ENCODE measurements at regions of chr9 and their contacts with region 1.

Region 1: DNA sequence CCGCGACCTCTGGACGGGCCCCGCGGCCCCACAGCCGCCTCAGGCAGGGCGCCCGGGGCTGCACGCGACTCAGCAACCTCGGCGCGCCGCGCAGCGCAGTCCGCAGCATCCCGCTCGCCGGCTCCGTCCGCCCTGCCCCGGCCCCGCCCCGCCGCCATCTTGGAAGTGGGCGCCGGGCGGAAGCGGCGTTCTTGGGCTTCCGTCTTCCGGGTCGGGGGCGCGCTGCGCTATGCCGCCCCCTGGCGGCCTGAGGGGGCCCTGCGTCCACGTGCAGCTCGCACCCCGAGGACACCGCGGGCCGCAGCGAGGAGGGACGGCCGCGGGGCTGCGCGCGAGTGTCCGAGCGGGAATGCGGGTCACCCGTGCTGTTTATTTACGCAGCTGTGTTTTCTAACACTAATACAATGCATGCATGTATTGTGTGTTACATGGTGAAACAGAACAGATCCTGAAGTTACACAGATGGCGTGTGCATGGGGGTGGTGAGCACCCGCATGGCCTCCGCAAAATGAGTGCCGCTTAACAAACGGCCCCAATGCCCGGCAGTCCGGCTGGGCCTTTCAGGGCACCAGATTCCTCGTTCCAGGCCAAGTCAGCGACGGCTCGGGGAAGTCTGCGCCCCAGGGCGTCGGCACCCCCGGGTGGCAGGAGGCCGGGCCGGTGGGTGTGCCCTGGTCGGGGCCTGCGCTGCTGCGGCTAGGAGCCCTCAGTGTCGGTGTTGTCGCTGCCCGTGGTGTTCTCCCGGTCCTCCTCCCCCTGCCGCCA is at the start of gene DNLZ:
- DNase-seq: peak; percentile 94
- H3K4me3 ChIP-seq: peak within 1 kb of the TSS; percentile 79 to 96
- H3K27ac ChIP-seq: peak within 1 kb of the TSS; percentile 75 to 96; a peak in 3 of 4 replicates
- H3K4me1 ChIP-seq: peaks cover 0 to 61% of the 10 kb centered on the region in 2 experiments; a peak in 1 of 4 replicates
- H3K27me3 ChIP-seq: no peaks in the 10 kb centered on the region
- CTCF ChIP-seq: peak; percentile 85
- EP300 ChIP-seq: no peak
- RAD21 ChIP-seq: peak; percentile 40
- polyA plus RNA-seq, gene DNLZ: 24.5 and 40.6 TPM in 2 replicates

Region 2: GRCh38 chr9:136327313-136327974 is 36.3 kb before region 1 on chr9 and contains the start of gene GPSM1:
- CTCF ChIA-PET with region 1: interaction called, 60 read pairs
- POLR2A ChIA-PET with region 1: interaction called, 11 read pairs
- DNase-seq: peak; percentile 94
- H3K4me3 ChIP-seq: peak within 1 kb of the TSS; percentile 82 to 84
- H3K27ac ChIP-seq: peak within 1 kb of the TSS; percentile 87 to 98
- H3K4me1 ChIP-seq: peaks cover 24 to 50% of the 10 kb centered on the region in 2 experiments
- H3K27me3 ChIP-seq: no peaks in the 10 kb centered on the region
- CTCF ChIP-seq: no peak
- EP300 ChIP-seq: no peak; a peak in 1 of 4 replicates
- RAD21 ChIP-seq: no peak
- polyA plus RNA-seq, gene GPSM1: 22.8 and 26.7 TPM in 2 replicates

Region 3: DNA sequence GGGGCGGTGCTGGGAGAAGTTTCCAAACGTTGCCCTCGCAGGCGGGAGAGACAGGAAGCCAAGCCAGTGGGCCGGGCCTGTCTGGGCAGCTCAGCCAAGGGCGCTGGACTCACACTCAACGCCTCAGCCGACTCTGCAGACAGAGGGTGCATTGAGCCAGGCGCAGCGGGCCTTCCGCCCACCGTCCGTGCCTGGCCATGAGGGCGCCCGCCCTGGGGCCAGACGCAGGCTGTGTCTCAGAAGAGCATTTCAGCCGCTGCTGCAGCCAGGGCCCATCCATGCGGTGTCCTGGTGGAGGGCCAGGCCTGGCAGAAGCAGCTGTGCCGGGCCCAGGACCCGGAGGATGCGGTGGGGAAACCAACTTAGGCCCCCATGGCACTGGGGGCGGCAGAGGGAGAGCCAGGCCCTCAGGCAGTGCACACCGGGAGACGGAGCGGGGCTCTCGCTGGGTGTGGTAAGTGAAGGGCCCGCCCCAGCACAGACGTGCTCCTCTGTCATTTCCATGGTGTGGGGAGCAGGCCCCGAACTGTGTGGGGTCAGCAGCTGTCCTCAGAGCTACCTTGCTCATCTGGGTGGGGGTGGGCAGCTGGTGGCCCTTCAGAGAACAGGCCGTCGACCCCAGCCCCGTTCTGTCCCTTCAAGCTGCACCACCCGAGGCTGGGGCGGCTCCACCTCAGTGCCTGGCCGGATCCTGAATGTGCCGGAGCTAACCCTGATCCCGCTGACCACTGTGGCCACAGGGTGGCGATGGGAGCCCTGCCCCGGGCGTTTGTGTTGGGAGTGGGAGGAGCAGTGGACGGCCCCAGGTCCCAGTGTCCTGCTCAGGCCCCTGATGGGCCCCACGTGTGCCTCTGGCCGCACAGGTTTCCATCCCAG is 18.3 kb before region 1 on chr9:
- CTCF ChIA-PET with region 1: interaction called, 28 read pairs
- POLR2A ChIA-PET with region 1: interaction called, 8 read pairs
- DNase-seq: peak; percentile 74
- H3K4me3 ChIP-seq: no peak overlapping the region
- H3K27ac ChIP-seq: peak overlapping the region in 1 of 2 experiments; percentile 58; a peak in 1 of 4 replicates
- H3K4me1 ChIP-seq: peaks cover 0 to 49% of the 10 kb centered on the region in 2 experiments; a peak in 1 of 4 replicates
- H3K27me3 ChIP-seq: no peaks in the 10 kb centered on the region
- CTCF ChIP-seq: peak; percentile 41
- EP300 ChIP-seq: no peak
- RAD21 ChIP-seq: peak; percentile 23

Region 4: DNA sequence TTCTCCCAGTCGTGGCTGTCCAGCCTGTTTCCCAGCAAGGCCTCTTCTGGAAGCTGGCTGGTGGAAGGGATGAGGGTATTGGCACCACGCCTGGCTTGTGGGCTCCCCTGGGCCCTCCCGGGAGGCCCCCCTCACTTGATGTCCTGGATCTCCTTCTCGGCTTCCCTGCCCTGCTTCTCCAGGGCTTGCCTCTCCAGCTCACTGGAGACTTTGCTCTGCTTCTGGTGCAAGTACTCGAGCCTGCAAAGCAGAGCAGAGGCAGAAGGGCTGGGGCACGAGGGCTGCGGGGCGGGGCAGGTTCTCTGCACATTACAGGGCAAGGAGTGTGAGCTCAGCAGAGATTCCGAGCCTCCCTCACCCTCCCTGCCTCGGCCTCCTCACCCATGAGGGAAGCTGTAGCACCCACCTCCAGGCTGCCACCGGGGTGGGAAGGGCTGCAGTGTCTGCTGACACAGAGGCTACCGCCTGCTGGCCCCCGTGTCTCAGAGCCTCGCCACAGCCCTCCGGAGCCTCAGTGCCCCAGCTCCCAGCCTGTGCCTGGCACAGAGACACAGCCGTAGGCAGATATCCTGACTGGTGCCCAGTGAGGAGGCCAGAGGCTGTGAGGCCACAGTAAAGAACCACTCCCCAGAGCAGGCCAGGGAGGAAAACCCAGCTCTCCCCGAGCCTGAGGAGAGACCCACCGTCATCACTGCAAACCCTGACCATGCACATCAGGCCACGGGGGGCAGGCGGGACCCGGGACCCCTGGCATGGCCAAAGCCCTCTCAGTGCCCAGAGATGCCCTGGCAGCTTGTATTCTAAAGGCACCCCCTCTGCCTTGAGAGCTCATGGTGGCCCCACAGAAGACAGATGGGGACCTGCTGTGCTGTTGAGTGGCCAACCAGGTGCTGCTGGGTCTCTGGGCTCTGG is 29.0 kb after region 1 on chr9:
- CTCF ChIA-PET with region 1: interaction called, 41 read pairs
- POLR2A ChIA-PET with region 1: interaction called, 4 read pairs
- DNase-seq: no peak
- H3K4me3 ChIP-seq: no peak overlapping the region
- H3K27ac ChIP-seq: no peak overlapping the region
- H3K4me1 ChIP-seq: no peaks in the 10 kb centered on the region
- H3K27me3 ChIP-seq: no peaks in the 10 kb centered on the region
- CTCF ChIP-seq: no peak
- EP300 ChIP-seq: no peak
- RAD21 ChIP-seq: no peak

Region 5: GRCh38 chr9:136410500-136411287 is 46.9 kb after region 1 on chr9 and contains the starts of genes ENTR1 and PMPCA:
- CTCF ChIA-PET with region 1: interaction called, 20 read pairs
- POLR2A ChIA-PET with region 1: interaction called, 5 read pairs
- DNase-seq: peak; percentile 99
- H3K4me3 ChIP-seq: peak within 1 kb of the TSS; percentile 92 to 98
- H3K27ac ChIP-seq: peak within 1 kb of the TSS; percentile 62 to 67; a peak in 3 of 4 replicates
- H3K4me1 ChIP-seq: peaks cover 16 to 24% of the 10 kb centered on the region in 2 experiments
- H3K27me3 ChIP-seq: no peaks in the 10 kb centered on the region
- CTCF ChIP-seq: no peak
- EP300 ChIP-seq: no peak
- RAD21 ChIP-seq: no peak
- polyA plus RNA-seq, gene ENTR1: 71.3 and 75.0 TPM in 2 replicates
- polyA plus RNA-seq, gene PMPCA: 125 and 134 TPM in 2 replicates

Region 6: GRCh38 chr9:136467766-136468563 is 104.2 kb after region 1 on chr9:
- CTCF ChIA-PET with region 1: no interaction called
- POLR2A ChIA-PET with region 1: no interaction called
- DNase-seq: no peak
- H3K4me3 ChIP-seq: no peak overlapping the region
- H3K27ac ChIP-seq: no peak overlapping the region
- H3K4me1 ChIP-seq: no peaks in the 10 kb centered on the region
- H3K27me3 ChIP-seq: no peaks in the 10 kb centered on the region
- CTCF ChIP-seq: no peak
- EP300 ChIP-seq: no peak
- RAD21 ChIP-seq: no peak